IMR-90 (cell line): ENCODE measurements at regions of chr1 and their contacts with region 1.

Region 1: GRCh38 chr1:206734499-206735142 is 36.0 kb upstream of the IL19 start:
- DNase-seq: peak; percentile 37
- ATAC-seq: peak; percentile 70
- H3K4me3 ChIP-seq: no peak overlapping the region
- H3K27ac ChIP-seq: no peak overlapping the region
- H3K4me1 ChIP-seq: peaks cover 13% of the 10 kb centered on the region
- H3K27me3 ChIP-seq: no peaks in the 10 kb centered on the region
- CTCF ChIP-seq: peak; percentile 78
- POLR2A ChIP-seq: no peak
- RAD21 ChIP-seq: peak; percentile 84

Region 2: DNA sequence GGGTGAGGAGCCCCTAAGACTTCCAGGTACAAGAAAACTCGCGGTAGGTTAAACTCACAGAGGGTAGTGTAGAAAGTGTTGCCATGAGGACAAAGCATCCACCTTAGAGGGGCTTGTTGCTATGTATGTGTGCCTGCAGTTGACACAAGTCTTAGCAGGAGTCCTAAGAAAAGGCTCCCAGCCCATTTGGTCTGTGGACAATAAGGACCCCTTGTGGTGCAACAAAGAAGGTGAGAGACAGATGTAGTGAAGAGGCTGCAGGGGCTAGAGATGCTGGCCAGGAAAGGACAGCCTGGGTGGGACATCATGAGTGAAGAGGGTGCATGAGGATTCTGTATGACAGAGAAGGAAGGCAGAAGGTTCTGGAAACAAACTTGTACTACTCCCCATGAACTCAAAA is 74.0 kb after region 1 on chr1:
- CTCF ChIA-PET with region 1: interaction called, 7 read pairs
- POLR2A ChIA-PET with region 1: no interaction called
- dilution Hi-C with region 1: no loop called
- in situ Hi-C with region 1: loop called (anchors 5 kb)
- intact Hi-C with region 1: loop called (anchors 1 kb)
- DNase-seq: peak; percentile 57
- ATAC-seq: peak; percentile 54; the same call in 1 of the 2 replicates
- H3K4me3 ChIP-seq: no peak overlapping the region
- H3K27ac ChIP-seq: no peak overlapping the region
- H3K4me1 ChIP-seq: no peaks in the 10 kb centered on the region
- H3K27me3 ChIP-seq: peaks cover 5% of the 10 kb centered on the region; the same call in 1 of the 2 replicates
- CTCF ChIP-seq: peak; percentile 62
- POLR2A ChIP-seq: no peak
- RAD21 ChIP-seq: peak; percentile 82

Region 3: GRCh38 chr1:207499573-207499972 is 765.0 kb after region 1 on chr1:
- CTCF ChIA-PET with region 1: no interaction called
- POLR2A ChIA-PET with region 1: no interaction called
- dilution Hi-C with region 1: no loop called
- in situ Hi-C with region 1: no loop called
- intact Hi-C with region 1: loop called (anchors 5 kb)
- DNase-seq: peak; percentile 59
- ATAC-seq: peak; percentile 93
- H3K4me3 ChIP-seq: no peak overlapping the region
- H3K27ac ChIP-seq: no peak overlapping the region
- H3K4me1 ChIP-seq: no peaks in the 10 kb centered on the region
- H3K27me3 ChIP-seq: peaks cover 24% of the 10 kb centered on the region
- CTCF ChIP-seq: peak; percentile 74
- POLR2A ChIP-seq: no peak
- RAD21 ChIP-seq: peak; percentile 81